ENCODE measurements at regions of chr9 and their contacts with region 1.

Region 1: DNA sequence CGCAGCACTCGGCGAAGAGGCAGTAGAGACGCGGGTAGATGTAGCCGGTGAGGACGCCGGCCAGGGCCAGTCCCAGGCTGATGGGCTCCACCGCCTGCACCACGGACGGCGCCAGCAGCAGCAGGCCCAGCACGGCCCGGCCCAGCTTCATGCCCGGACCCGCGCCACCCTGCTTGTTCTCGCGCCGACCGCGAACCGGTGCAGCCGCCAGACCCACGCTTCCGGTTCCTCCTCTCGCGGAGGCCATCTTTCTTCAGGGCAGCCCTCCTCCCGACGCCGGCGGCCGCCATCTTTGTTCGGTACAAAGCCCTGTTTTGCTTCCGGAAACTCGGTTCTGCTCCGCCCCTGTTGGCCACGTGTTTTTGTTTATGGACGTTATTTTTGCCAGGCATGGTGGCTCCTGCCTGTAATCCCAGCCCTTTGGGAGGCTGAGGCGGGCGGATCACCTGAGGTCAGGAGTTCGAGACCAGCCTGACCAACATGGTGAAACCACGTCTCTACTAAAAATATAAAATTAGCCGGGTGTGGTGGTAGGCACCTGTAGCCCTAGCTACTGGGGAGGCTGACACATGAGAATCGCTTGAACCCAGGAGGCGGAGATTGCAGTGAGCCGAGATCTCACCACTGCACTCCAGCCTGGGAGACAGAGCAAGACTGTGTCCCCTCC is at the start of gene TOR1A:
- DNase-seq: peak; percentile 91
- H3K4me3 Mint-ChIP-seq: peak within 1 kb of the TSS; percentile 83
- H3K27ac Mint-ChIP-seq: peak within 1 kb of the TSS; percentile 57
- H3K4me1 Mint-ChIP-seq: peaks cover 9% of the 10 kb centered on the region
- H3K27me3 Mint-ChIP-seq: no peaks in the 10 kb centered on the region
- total RNA-seq, gene TOR1A: 52.5 and 55.8 TPM in 2 replicates

Region 2: GRCh38 chr9:129802851-129803675 is 21.0 kb before region 1 on chr9 and contains the start of gene TOR1B:
- intact Hi-C with region 1: loop called (anchors 1 kb)
- DNase-seq: peak; percentile 92
- H3K4me3 Mint-ChIP-seq: peak within 1 kb of the TSS; percentile 88
- H3K27ac Mint-ChIP-seq: peak within 1 kb of the TSS; percentile 85
- H3K4me1 Mint-ChIP-seq: peaks cover 21% of the 10 kb centered on the region
- H3K27me3 Mint-ChIP-seq: no peaks in the 10 kb centered on the region
- total RNA-seq, gene TOR1B: 23.9 and 25.2 TPM in 2 replicates

Region 3: DNA sequence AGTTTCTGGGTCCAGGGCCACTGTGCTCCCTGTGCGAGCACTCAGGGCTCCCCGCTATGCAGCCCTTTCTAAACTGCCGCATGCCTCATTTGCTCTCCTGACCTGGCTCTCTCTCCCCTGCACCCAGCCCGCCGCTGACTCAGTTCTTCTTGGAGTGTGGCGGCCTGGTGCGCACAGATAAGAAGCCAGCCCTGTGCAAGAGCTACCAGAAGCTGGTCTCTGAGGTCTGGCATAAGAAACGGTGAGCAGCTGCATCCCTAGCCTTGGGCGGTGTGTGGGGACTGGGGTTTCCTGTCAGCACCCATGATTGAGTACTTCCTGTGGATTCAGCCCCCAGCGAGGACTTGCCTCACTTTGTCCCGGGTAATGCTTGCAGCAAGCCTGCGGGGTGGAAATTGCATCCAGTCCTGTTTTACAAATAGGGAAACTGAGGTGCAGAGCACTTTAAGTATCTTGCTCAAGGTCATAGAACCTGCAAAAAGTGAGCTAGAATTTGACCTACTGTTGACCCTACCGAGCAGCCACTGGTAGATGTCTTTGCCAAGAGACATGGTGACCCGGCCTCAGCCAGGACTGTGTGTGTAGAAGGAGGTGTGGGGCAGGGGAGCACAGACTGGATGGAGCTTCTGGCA is 39.1 kb after region 1 on chr9:
- intact Hi-C with region 1: loop called (anchors 5 kb)
- DNase-seq: peak; percentile 79
- H3K4me3 Mint-ChIP-seq: peak overlapping the region; percentile 66
- H3K27ac Mint-ChIP-seq: peak overlapping the region; percentile 91
- H3K4me1 Mint-ChIP-seq: peaks cover 67% of the 10 kb centered on the region
- H3K27me3 Mint-ChIP-seq: no peaks in the 10 kb centered on the region

Measured in activated T-helper 2 cell treated with anti-CD3 and anti-CD28 coated beads, Interferon-gamma antibody, Interleukin-2, Interleukin-4, amounts not matched to agents 10 μg/mL and 5 μg/mL and 100 μg/mL, durations not matched to agents 14 hours and 24 hours and 36 hours (primary cell).